ENCODE measurements at regions of chr2 and their contacts with region 1.

Region 1: GRCh38 chr2:162123806-162124758 is 28.0 kb downstream of the GCG start:
- DNase-seq: peak; percentile 71
- H3K4me3 Mint-ChIP-seq: no peak overlapping the region
- H3K27ac Mint-ChIP-seq: no peak overlapping the region
- H3K4me1 Mint-ChIP-seq: no peaks in the 10 kb centered on the region
- H3K27me3 Mint-ChIP-seq: peaks cover 27% of the 10 kb centered on the region
- CTCF ChIP-seq: peak; percentile 49

Region 2: DNA sequence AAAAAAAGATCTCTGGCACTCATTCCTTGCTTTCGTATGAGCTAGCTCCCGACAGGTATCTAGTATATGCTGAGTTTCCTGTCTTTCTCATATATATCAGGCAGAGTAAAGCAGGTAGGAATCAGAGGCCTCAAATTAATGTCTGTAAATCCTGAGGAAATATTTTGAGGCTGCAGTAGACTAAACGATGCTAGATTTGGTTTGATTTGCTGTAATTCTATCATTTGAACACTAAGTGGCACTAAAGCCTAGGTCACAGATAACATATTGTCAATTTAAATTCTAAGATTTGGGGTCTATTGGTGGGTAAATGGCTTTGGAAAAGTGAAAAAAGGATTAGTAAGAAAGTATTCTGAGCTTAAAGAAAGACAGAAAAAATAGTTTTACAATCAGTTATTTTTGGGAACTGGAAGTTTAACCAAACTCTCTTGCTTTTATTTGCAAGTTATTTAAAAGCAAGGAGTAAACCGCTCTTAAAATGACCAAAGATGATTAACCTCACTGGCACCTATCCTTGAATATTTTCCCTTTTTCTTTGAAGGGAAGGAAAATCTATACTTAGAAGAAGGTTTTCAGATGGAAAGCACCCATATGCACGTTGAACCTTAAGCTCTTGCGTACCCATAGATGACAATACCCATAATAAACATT is 537.4 kb before region 1 on chr2:
- CTCF ChIA-PET with region 1: interaction called, 42 read pairs
- POLR2A ChIA-PET with region 1: no interaction called
- intact Hi-C with region 1: loop called (anchors 1 kb)
- DNase-seq: peak; percentile 35
- H3K4me3 Mint-ChIP-seq: no peak overlapping the region
- H3K27ac Mint-ChIP-seq: no peak overlapping the region
- H3K4me1 Mint-ChIP-seq: no peaks in the 10 kb centered on the region
- H3K27me3 Mint-ChIP-seq: peaks cover 36% of the 10 kb centered on the region
- CTCF ChIP-seq: peak; percentile 74

Region 3: DNA sequence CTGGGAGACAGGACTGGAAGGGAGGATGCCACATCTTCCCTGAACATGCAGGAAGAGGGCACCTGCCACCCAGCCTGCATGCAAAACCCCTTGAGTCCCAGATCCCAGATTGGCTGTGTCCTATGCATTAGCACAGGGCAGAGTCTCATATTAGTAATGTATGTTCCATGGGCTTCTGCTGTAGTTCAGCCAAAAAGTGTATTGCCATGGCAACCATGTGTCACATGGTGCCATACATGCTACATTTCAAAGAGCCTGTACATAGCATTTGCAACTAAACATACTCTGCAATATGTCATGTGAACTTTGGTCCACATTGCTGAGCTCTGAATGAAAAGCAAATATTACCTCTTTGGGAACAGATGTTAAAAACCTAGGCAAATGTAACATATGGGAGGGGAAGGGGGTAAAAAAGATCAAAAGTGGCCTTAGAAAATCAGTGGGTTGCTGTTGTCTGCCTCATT is 128.5 kb before region 1 on chr2:
- CTCF ChIA-PET with region 1: interaction called, 15 read pairs
- POLR2A ChIA-PET with region 1: interaction called, 5 read pairs
- intact Hi-C with region 1: no loop called
- DNase-seq: no peak
- H3K4me3 Mint-ChIP-seq: no peak overlapping the region
- H3K27ac Mint-ChIP-seq: no peak overlapping the region
- H3K4me1 Mint-ChIP-seq: peaks cover 11% of the 10 kb centered on the region
- H3K27me3 Mint-ChIP-seq: peaks cover 14% of the 10 kb centered on the region
- CTCF ChIP-seq: no peak

Region 4: DNA sequence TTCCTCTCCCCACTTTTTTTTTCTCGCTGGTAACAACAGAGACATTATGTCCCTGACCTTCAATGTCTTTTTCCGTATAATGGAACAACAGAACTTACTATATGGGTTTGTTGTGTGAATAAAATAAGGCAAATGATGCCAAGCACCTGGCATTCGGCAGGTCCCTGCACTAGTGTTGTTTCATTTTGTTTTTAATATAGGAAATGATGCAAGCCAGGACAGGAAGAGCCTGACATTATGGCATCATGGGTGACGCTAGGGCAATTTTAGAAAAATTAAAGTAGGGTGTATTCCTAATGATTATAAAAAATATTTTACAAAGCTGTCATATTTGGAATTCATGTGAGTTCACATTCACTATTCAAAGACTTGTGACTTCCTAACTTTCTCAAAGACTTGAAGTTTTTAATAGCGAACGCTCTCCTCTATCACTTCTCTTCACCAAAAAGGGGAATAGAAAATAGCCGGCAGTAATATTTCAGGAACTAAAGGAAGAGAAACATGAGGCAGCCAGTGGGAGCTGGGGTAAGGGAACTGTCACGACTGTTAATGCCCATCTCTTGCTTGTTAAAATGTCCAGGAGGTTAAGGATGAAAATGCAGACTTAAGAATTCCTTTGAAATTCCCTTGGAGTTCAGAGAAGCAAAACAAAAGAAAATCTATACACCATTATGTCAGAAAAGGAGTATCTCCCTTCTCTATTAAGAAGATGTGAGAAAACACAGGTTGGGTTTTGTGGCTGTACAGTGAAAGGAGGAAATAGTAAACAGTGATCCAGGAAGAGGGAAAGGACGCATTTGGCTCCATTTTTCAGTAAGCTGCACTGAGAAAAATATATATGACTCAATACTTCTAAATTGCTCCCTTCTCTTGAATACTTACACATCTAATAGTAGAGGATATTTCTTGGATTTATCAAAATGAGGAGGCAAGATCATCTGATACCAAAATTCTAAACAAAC is 110.3 kb before region 1 on chr2:
- CTCF ChIA-PET with region 1: interaction called, 28 read pairs
- POLR2A ChIA-PET with region 1: no interaction called
- intact Hi-C with region 1: no loop called
- DNase-seq: no peak
- H3K4me3 Mint-ChIP-seq: no peak overlapping the region
- H3K27ac Mint-ChIP-seq: no peak overlapping the region
- H3K4me1 Mint-ChIP-seq: no peaks in the 10 kb centered on the region
- H3K27me3 Mint-ChIP-seq: peaks cover 11% of the 10 kb centered on the region
- CTCF ChIP-seq: no peak

Region 5: GRCh38 chr2:162143969-162144368 is 19.9 kb after region 1 on chr2:
- CTCF ChIA-PET with region 1: interaction called, 14 read pairs
- POLR2A ChIA-PET with region 1: interaction called, 3 read pairs
- intact Hi-C with region 1: no loop called
- DNase-seq: no peak
- H3K4me3 Mint-ChIP-seq: no peak overlapping the region
- H3K27ac Mint-ChIP-seq: no peak overlapping the region
- H3K4me1 Mint-ChIP-seq: peaks cover 9% of the 10 kb centered on the region
- H3K27me3 Mint-ChIP-seq: peaks cover 57% of the 10 kb centered on the region
- CTCF ChIP-seq: no peak

Region 6: DNA sequence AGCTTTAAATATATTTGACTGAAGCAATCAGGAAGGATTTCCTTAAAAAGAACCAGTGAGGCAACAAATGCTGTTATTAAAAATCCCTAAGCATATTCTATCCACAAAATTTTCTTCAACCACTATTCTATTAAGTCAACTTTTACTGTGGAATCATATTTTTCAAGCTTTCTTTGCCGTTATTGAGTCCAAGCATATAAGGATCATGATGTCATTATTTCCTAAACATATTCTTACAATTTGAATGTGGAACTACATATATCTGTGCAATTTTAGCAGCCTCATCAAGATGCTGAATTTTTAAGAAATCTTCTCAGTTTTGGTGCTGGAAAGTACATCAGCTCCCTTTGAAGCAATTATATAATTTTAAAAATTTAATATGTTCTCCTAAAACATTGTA is 188.8 kb after region 1 on chr2:
- CTCF ChIA-PET with region 1: no interaction called
- POLR2A ChIA-PET with region 1: no interaction called
- intact Hi-C with region 1: no loop called
- DNase-seq: no peak
- H3K4me3 Mint-ChIP-seq: no peak overlapping the region
- H3K27ac Mint-ChIP-seq: no peak overlapping the region
- H3K4me1 Mint-ChIP-seq: peaks cover 9% of the 10 kb centered on the region
- H3K27me3 Mint-ChIP-seq: no peaks in the 10 kb centered on the region
- CTCF ChIP-seq: no peak

Measured in MCF 10A (cell line).